ENCODE measurements at regions of chr20 and their contacts with region 1.

Region 1: DNA sequence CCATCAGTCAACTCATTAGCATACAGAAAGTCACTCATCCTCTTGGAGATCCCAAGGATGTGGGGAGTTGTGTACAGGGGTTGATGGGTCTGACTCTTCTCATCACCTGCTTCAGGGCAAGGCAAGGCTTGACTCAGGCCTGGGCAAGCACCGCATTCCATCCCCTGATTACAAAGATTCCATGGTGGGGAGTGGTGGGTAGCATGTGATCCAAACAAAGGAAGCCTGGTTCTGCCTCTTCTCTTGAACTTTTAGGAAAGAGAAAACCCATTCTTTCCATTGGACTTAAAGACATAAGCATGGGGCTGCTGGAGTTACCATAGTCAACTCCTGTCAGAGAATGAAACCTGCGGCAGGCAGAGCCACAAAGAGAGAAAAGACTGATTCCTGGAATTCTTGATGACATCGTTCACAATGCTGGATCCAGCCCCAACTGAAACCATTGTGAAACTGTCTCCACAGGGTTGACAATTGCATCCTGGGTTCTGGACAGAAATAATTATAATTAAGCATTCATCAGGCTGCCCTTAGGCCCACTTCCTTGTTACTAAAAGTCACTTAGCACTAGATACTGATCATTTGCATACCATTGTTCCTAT is 235.8 kb upstream of the KCNG1 start:
- DNase-seq: no peak
- H3K4me3 ChIP-seq: no peak overlapping the region
- H3K27ac ChIP-seq: no peak overlapping the region
- H3K4me1 ChIP-seq: peaks cover 0 to 15% (median 6%) of the 10 kb centered on the region in 4 experiments; a peak in 2 of 7 replicates
- H3K27me3 ChIP-seq: no peaks in the 10 kb centered on the region
- CTCF ChIP-seq: no peak
- EP300 ChIP-seq: no peak
- POLR2A ChIP-seq: no peak
- RAD21 ChIP-seq: no peak

Region 2: DNA sequence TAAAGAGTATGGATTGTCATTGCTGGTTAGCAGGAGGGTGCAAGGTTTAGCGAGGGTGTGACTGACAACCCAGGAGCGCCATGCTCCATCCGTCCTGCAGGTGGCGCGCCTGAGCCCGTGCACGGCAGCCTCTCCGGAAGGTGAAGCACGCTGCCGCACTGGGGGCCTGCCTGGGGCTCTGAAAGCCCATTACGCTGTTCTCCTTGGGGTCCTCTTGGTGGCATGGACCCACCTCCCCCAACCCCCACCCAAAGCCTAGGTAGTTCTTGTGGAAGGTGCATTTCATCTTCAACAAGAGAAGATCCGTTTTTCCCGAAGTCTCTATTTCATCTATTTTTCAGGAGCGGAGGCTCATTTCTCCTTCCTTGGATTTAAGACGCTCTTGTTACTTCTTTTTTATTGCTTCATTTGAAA is 38.4 kb before region 1 on chr20:
- CTCF ChIA-PET with region 1: interaction called, 4 read pairs
- POLR2A ChIA-PET with region 1: interaction called, 10 read pairs
- DNase-seq: peak in 1 of 2 experiments; percentile 93
- H3K4me3 ChIP-seq: no peak overlapping the region
- H3K27ac ChIP-seq: no peak overlapping the region
- H3K4me1 ChIP-seq: peaks cover 2 to 11% (median 3%) of the 10 kb centered on the region in 4 experiments; a peak in 5 of 7 replicates
- H3K27me3 ChIP-seq: peaks cover 0 to 6% (median under 1%) of the 10 kb centered on the region in 4 experiments; a peak in 3 of 7 replicates
- CTCF ChIP-seq: peak; percentile 76 to 99 (median 95)
- EP300 ChIP-seq: no peak
- POLR2A ChIP-seq: no peak
- RAD21 ChIP-seq: peak; percentile 77

Region 3: DNA sequence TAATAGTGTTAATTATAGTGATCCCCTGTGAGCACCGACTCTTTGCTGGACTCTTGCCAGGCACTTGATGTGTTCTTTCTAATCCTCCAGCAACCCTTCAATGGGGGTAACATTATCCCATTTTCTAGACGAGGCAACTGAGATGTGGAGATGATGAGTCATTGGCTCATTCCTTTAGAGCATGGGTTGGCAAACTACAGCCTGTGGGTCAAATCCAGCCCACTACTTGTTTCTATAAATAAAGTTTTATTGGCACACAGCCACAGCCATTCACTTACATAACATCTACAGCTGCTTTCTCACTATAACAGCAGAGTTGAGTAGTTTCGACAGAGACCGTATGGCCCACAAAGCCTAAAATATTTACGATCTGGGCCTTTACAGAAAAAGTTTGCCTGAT is 13.7 kb after region 1 on chr20:
- CTCF ChIA-PET with region 1: interaction called, 20 read pairs
- POLR2A ChIA-PET with region 1: no interaction called
- DNase-seq: no peak
- H3K4me3 ChIP-seq: no peak overlapping the region
- H3K27ac ChIP-seq: no peak overlapping the region
- H3K4me1 ChIP-seq: no peaks in the 10 kb centered on the region
- H3K27me3 ChIP-seq: no peaks in the 10 kb centered on the region
- CTCF ChIP-seq: no peak
- EP300 ChIP-seq: no peak
- POLR2A ChIP-seq: no peak
- RAD21 ChIP-seq: no peak